WTC11 (cell line): ENCODE measurements at regions of chr17 and their contacts with region 1.

Region 1: GRCh38 chr17:73820686-73821448 is 176.6 kb upstream of the SDK2 start:
- DNase-seq: peak; percentile 67
- ATAC-seq: peak; percentile 93
- H3K4me3 Mint-ChIP-seq: peak overlapping the region; percentile 35; the same call in 1 of the 2 replicates
- H3K27ac Mint-ChIP-seq: no peak overlapping the region
- H3K4me1 Mint-ChIP-seq: peaks cover 47% of the 10 kb centered on the region
- H3K27me3 Mint-ChIP-seq: peaks cover 63% of the 10 kb centered on the region
- CTCF ChIP-seq: no peak

Region 2: GRCh38 chr17:73782641-73783381 is 38.1 kb before region 1 on chr17:
- CTCF ChIA-PET with region 1: interaction called, 18 read pairs
- POLR2A ChIA-PET with region 1: interaction called, 3 read pairs
- DNase-seq: peak; percentile 68
- ATAC-seq: peak; percentile 60
- H3K4me3 Mint-ChIP-seq: no peak overlapping the region
- H3K27ac Mint-ChIP-seq: no peak overlapping the region
- H3K4me1 Mint-ChIP-seq: peaks cover 49% of the 10 kb centered on the region
- H3K27me3 Mint-ChIP-seq: peaks cover 3% of the 10 kb centered on the region; the same call in 1 of the 2 replicates
- CTCF ChIP-seq: peak; percentile 42

Region 3: DNA sequence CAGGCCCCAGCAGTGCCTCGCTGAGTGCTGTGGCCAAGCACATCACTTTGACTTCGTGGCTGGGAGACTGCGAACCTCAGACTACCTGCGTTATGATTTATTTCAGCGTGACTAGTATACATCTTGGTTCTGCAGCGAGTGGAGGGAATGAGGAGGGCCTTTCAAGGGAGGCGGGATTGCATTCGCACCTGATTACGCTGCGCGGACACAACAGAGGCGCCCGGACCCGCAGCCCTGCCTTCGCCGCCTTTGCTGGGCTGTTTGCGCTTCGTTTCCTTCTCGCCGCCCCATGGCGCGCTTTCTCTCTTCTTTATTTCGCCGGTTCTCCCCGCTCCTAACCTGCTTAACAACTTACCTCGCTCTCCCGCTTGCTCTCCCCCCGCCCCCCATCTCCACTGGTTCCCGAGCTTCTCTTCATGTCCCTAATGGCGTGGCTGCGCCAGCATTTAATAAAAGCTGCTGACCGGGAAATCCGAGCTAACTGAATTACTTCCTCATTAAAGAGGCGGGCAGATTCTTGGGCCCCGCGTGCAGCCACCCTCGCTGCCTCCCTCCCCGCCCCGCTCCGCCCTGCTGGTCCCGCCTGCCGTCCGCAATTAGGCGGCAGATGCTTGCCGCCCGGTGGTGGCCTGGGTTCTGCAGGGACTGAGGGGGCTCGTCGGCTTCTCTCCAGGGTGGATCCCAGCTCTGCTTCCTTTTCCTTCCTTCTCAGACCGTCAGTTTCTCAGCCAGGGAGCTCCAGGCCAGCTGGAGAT is 81.0 kb after region 1 on chr17:
- CTCF ChIA-PET with region 1: interaction called, 11 read pairs
- POLR2A ChIA-PET with region 1: no interaction called
- DNase-seq: peak; percentile 65
- ATAC-seq: peak; percentile 66
- H3K4me3 Mint-ChIP-seq: peak overlapping the region; percentile 75
- H3K27ac Mint-ChIP-seq: no peak overlapping the region
- H3K4me1 Mint-ChIP-seq: peaks cover 26% of the 10 kb centered on the region
- H3K27me3 Mint-ChIP-seq: peaks cover 100% of the 10 kb centered on the region
- CTCF ChIP-seq: no peak